Heart right ventricle (tissue), 16 donors: ENCODE measurements at regions of chr4 and their contacts with region 1.

Region 1: GRCh38 chr4:37452952-37453280 is 208.4 kb downstream of the NWD2 start:
- DNase-seq: peak in 1 of 2 donors; percentile 35
- ATAC-seq: peak; percentile 46 to 90 (median 68)
- H3K4me3 ChIP-seq: peak overlapping the region in 8 of 10 donors; percentile 46 to 64 (median 54)
- H3K27ac ChIP-seq: no peak overlapping the region
- H3K4me1 ChIP-seq: peaks cover 0 to 19% (median 10%) of the 10 kb centered on the region in 9 donors
- H3K27me3 ChIP-seq: peaks cover 0 to 95% (median 72%) of the 10 kb centered on the region in 7 donors
- CTCF ChIP-seq: peak in 7 of 9 donors; percentile 38 to 68 (median 57)

Region 2: GRCh38 chr4:37503261-37503660 is 50.3 kb after region 1 on chr4:
- intact Hi-C with region 1: no loop called
- DNase-seq: no peak
- ATAC-seq: no peak
- H3K4me3 ChIP-seq: no peak overlapping the region
- H3K27ac ChIP-seq: no peak overlapping the region
- H3K4me1 ChIP-seq: no peaks in the 10 kb centered on the region
- H3K27me3 ChIP-seq: no peaks in the 10 kb centered on the region
- CTCF ChIP-seq: no peak

Region 3: GRCh38 chr4:37561803-37562207 is 108.9 kb after region 1 on chr4:
- intact Hi-C with region 1: loop called (anchors 2 to 10 kb)
- DNase-seq: no peak
- ATAC-seq: no peak
- H3K4me3 ChIP-seq: no peak overlapping the region
- H3K27ac ChIP-seq: no peak overlapping the region
- H3K4me1 ChIP-seq: no peaks in the 10 kb centered on the region
- H3K27me3 ChIP-seq: no peaks in the 10 kb centered on the region
- CTCF ChIP-seq: no peak

Region 4: GRCh38 chr4:37568481-37568880 is 115.6 kb after region 1 on chr4:
- intact Hi-C with region 1: loop called (anchors 2 to 10 kb)
- DNase-seq: no peak
- ATAC-seq: no peak
- H3K4me3 ChIP-seq: no peak overlapping the region
- H3K27ac ChIP-seq: no peak overlapping the region
- H3K4me1 ChIP-seq: no peaks in the 10 kb centered on the region
- H3K27me3 ChIP-seq: no peaks in the 10 kb centered on the region
- CTCF ChIP-seq: no peak